Right ventricle myocardium inferior (tissue), 1 donor: ENCODE measurements at regions of chr2 and their contacts with region 1.

Region 1: GRCh38 chr2:40554668-40555285 is 102.9 kb upstream of the SLC8A1 start:
- DNase-seq: no peak
- ATAC-seq: peak; percentile 86

Region 2: GRCh38 chr2:39665811-39666490 is 888.8 kb before region 1 on chr2 and contains the start of gene TMEM178A:
- intact Hi-C with region 1: no loop called
- DNase-seq: no peak
- ATAC-seq: peak; percentile 44
- total RNA-seq, gene TMEM178A: 3.0 TPM

Region 3: GRCh38 chr2:39913648-39914461 is 640.9 kb before region 1 on chr2:
- intact Hi-C with region 1: loop called (anchors 10 kb)
- DNase-seq: no peak
- ATAC-seq: peak; percentile 70

Region 4: DNA sequence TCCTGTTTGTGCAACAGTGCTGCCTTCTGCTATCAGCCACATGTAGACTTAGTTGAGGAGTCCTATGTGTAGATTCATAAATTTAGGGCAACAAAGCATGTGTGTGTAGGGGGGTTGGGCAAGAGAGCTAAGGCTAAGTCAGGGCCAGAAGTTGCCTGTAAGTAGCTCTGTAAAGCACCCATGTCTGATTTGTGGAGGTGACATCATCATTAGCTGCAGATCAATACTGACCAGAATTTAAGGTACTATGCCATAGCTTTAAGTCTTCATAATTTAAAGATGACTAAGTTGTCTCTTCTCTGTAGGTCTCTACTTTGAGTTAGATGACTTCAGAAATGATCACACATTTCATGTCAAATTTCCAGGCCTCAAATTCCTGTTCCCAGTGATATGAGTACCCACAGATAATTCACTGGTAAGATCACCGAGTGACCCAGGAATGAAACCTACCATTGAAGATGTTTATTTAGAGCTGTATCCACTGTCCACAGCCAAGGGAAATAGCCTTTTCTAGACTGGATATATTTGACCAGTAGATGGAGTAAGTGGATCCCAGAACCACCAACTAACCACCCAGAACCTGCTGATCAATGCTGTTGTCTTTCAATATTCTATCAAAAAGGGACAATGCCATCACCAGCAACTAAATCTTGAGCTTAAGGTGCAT is 341.8 kb before region 1 on chr2:
- intact Hi-C with region 1: loop called (anchors 10 kb)
- DNase-seq: no peak
- ATAC-seq: peak; percentile 56

Region 5: GRCh38 chr2:40244675-40245074 is 310.1 kb before region 1 on chr2:
- intact Hi-C with region 1: loop called (anchors 10 kb)
- DNase-seq: peak; percentile 53
- ATAC-seq: peak; percentile 43

Region 6: DNA sequence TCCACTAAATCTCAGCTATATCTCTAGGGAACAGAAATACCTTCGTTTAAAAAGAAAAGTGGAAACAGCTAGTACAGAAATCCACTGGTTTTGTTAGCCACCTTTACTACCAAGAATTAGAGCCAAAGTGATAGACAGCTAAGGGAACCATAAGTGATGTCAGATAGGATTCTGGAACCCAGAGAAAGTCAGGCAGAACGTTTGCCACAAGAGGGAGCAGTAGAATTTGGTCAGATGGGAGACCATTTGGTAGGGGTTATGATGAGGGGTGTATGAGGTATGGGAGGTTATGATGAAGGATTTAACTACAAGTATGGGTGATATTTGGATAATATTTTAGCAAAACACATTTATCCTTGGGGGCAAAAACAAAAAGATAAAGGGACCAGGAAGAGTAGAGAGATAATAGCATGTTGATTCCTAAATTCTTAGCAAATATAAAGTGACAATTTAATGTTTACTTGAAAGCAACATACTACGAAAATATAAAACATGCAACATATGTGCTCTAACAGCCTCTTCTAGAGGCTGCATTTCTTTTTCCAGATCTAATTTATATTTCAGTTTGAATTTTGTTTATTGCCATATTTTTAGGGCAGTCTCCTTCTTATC is 106.2 kb before region 1 on chr2:
- intact Hi-C with region 1: loop called (anchors 2 kb)
- DNase-seq: no peak
- ATAC-seq: no peak

Region 7: DNA sequence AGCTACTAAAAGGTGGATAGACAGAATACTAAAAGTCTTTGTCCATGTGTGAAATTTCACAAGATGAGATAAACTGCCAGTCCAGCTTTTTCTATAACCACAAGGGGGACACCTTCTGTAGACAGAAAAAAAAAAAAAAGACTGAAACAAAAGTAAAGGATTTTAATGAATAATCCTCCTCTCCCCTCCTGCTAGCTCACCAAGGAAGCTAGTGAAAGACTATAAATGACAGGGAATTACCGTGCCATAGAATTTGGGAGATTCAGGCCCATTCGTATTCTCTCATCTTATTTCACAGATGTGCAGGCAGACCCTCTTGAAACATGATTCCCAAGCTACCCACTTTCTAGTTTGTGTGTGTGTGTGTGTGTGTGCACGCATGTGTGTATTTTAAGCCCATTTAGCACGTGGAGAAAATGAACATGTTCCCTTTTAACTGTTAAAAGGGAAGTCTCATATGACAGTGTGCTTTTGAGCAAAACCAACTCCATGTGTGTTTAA is 66.6 kb before region 1 on chr2:
- intact Hi-C with region 1: loop called (anchors 2 kb)
- DNase-seq: no peak
- ATAC-seq: peak; percentile 49

Region 8: DNA sequence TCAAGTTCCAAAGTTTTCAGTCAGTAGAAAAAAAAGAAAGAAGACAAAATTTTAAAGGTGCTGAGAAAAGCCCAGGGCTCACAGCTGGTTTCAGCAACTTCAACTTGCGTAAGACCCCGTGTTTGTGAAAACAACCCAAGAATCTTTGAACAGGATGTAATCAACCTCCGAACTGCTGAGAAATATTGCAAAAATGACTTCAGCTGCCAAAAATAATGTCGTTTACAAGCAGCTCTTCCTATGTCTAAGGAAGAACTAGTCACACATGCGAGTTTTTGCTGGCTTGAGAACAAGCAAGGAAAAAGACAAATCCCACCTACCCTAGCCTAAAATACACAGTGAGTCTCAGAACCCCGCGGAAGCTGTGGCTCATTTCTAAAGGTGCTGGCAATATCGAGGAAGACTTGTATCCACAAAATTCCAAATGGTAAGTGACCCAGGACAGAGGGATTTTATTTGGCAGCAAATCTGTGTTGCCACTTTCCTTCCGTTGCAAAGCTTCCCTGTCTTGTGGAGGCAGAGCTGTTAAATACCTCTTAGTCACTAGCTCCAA is 43.0 kb before region 1 on chr2:
- intact Hi-C with region 1: loop called (anchors 5 kb)
- DNase-seq: no peak
- ATAC-seq: peak; percentile 56

Region 9: DNA sequence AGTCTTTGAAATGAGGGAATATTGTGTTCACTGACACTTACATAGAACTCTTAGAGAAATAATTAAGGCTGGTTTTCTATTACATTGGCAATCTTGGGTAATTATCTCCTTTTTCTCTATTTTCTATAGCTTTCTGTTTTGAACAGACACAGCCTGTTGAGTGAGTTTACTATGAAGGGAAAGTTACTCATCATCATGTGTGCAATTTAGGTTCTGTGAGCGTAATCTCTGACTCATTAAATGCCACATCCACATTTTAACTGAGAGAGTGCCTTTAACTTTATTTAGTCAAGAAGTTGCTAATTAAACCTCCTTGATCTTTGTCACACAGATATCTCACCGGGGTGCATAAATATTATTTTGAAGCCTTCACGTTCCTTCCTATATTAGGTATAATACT is 71.1 kb after region 1 on chr2:
- intact Hi-C with region 1: no loop called
- DNase-seq: no peak
- ATAC-seq: no peak